ENCODE measurements at regions of chr7 and their contacts with region 1.

Region 1: GRCh38 chr7:22110227-22110839 is 164.6 kb upstream of the CDCA7L start:
- DNase-seq: peak; percentile 81
- H3K4me3 Mint-ChIP-seq: no peak overlapping the region
- H3K27ac Mint-ChIP-seq: peak overlapping the region; percentile 45
- H3K4me1 Mint-ChIP-seq: peaks cover 10% of the 10 kb centered on the region
- H3K27me3 Mint-ChIP-seq: no peaks in the 10 kb centered on the region
- CTCF ChIP-seq: peak; percentile 86

Region 2: DNA sequence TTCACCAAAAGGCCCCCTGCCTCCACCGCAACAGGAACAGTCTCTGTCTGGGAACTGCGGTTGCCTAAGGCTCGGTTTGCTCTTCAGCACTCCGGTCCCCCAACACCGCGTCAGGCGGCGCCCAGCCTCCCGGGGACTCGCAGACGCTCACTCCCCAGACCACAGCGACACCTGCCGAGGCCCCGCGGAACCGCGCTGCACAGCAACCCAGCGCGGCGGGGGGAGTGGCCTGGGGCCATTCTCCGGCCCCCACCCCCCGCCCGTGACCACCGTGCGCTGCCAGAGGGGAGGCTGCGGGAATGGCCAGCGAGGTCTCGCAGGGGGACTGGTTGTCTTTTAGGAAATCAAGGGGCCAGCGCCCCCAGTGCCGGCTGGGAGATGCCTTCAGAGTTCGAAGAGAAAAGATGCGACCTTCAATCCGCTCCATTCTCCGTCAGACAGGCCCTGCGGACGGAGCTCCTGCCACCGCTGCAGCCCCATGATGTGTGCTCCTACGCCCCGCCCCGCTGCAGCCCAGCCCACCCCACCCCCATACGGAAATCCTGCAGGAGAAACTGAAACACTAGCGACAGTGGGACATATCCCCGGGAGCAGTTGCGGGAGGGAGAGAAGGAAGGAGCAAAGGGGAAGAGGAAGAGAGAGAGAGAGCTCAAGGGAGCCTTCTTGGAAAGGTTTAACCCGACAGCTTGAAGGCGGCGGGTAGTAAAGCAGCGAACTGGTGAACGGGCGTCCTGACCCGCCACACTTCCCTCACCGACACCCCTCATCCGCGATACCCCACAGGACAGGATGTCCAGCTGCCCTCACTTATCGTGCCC is 27.2 kb before region 1 on chr7:
- CTCF ChIA-PET with region 1: interaction called, 10 read pairs
- intact Hi-C with region 1: no loop called
- DNase-seq: peak; percentile 99
- H3K4me3 Mint-ChIP-seq: peak overlapping the region; percentile 89
- H3K27ac Mint-ChIP-seq: peak overlapping the region; percentile 95
- H3K4me1 Mint-ChIP-seq: peaks cover 18% of the 10 kb centered on the region
- H3K27me3 Mint-ChIP-seq: peaks cover 40% of the 10 kb centered on the region
- CTCF ChIP-seq: peak; percentile 99

Region 3: GRCh38 chr7:22295402-22296264 is 185.3 kb after region 1 on chr7:
- CTCF ChIA-PET with region 1: interaction called, 5 read pairs
- intact Hi-C with region 1: loop called (anchors 2 kb)
- DNase-seq: no peak
- H3K4me3 Mint-ChIP-seq: no peak overlapping the region
- H3K27ac Mint-ChIP-seq: peak overlapping the region; percentile 37
- H3K4me1 Mint-ChIP-seq: peaks cover 18% of the 10 kb centered on the region
- H3K27me3 Mint-ChIP-seq: no peaks in the 10 kb centered on the region
- CTCF ChIP-seq: no peak

Region 4: DNA sequence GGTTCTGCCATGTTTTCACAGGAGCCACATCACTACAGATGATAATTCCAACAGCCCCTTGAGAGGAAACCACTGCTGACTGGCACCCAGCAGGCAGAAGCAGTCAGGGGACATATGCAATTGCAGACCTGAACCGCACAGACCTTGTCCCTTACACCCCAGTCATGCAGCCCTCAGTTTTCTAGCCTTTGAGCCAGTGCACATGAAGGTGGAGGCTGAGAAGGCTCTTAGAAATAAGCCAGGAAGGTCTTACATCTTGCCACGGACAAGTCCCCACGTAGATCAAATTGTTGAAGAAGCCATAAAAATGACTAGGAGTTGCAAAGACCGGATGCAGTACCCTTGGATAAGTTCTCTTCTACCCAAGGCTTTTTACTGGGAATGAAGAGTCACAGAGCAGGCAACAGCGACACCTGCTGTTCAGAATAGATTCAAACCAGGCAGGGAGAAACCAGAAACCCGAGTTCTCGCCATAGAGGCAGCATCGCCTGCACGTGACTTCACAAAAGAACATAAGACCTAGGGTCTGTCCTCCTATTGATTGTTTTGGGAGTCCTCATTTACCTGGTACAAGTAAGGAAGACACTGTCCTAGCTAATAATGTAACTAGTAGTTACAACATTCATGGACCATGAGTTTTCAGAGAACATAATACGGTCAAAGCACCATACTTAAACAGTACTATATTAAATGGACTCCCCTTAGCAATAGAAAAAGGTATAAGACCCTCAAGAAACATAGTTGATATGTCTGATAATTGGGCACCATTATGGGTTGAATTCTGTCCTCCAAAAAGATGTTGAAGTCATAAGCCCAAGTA is 378.5 kb after region 1 on chr7:
- CTCF ChIA-PET with region 1: interaction called, 5 read pairs
- intact Hi-C with region 1: loop called (anchors 1 kb)
- DNase-seq: peak; percentile 85
- H3K4me3 Mint-ChIP-seq: no peak overlapping the region
- H3K27ac Mint-ChIP-seq: no peak overlapping the region
- H3K4me1 Mint-ChIP-seq: peaks cover 22% of the 10 kb centered on the region
- H3K27me3 Mint-ChIP-seq: no peaks in the 10 kb centered on the region
- CTCF ChIP-seq: peak; percentile 97

Region 5: DNA sequence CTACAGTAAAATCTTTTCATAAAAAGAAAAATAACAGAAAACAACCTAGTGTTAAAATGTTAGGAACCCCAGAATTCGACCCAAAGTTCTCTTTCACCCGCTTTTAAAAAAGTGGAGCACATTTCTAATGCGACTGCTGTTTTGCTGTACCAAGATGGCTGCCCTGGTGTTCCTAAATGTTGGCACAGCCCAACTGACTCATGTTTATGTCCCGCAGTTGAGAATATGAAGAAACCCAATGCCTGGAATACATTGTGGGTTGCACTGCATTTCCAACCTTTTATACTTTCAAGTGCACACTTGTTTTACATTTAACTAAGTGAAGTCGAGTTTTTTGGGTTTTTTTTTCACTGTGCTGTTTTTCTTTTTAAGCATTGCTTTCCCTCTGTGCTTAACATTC is 388.7 kb after region 1 on chr7:
- CTCF ChIA-PET with region 1: interaction called, 8 read pairs
- intact Hi-C with region 1: loop called (anchors 2 kb)
- DNase-seq: no peak
- H3K4me3 Mint-ChIP-seq: peak overlapping the region; percentile 71
- H3K27ac Mint-ChIP-seq: no peak overlapping the region
- H3K4me1 Mint-ChIP-seq: peaks cover 22% of the 10 kb centered on the region
- H3K27me3 Mint-ChIP-seq: peaks cover 13% of the 10 kb centered on the region
- CTCF ChIP-seq: no peak

Measured in Calu3 (cell line).